Activated CD4-positive, alpha-beta T cell treated with anti-CD3 and anti-CD28 coated beads for 36 hours (primary cell): ENCODE measurements at regions of chr5 and their contacts with region 1.

Region 1: DNA sequence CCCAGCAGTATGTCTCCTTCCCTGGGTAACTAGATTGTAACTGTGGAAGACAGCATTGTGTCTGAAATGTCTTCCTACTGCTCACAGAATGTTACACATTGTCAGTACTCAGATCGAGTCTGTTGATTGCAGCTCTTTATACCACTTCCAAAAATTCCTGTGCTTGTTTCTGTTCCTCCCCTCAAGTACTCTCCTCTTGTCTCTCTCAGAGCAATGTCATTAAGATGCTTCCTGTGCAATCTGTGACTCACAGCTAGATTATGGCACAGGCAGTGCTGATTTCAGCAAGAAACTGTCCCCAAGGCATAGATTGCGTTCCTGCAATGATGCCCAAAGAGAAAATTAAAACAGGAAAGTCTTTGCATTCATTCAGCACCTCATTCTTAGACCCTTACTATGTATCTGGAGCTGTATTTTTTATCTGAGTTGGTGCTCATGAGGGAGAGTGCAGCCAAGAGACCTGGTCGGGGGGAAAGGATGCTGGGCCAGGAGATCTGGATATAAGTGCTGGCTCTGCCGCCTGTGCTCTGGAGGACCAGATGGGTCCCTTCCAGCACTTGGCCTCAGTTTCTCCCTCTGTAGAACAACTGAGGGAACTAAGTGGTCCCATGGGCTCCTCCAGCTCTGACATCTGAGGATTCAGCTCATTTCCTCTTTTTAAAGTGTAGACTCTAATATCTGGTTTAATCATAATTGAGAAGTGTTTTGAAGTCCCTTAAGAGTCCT is 40.8 kb upstream of the GNPDA1 start:
- DNase-seq: peak; percentile 19
- ATAC-seq: peak; percentile 93
- H3K4me3 Mint-ChIP-seq: no peak overlapping the region
- H3K27ac Mint-ChIP-seq: peak overlapping the region; percentile 55
- H3K4me1 Mint-ChIP-seq: peaks cover 28% of the 10 kb centered on the region
- H3K27me3 Mint-ChIP-seq: no peaks in the 10 kb centered on the region

Region 2: GRCh38 chr5:142063878-142064331 is 10.3 kb after region 1 on chr5:
- CTCF ChIA-PET with region 1: interaction called, 11 read pairs
- POLR2A ChIA-PET with region 1: no interaction called
- intact Hi-C with region 1: no loop called
- DNase-seq: peak; percentile 58
- ATAC-seq: peak; percentile 82
- H3K4me3 Mint-ChIP-seq: peak overlapping the region; percentile 5
- H3K27ac Mint-ChIP-seq: peak overlapping the region; percentile 49
- H3K4me1 Mint-ChIP-seq: peaks cover 14% of the 10 kb centered on the region
- H3K27me3 Mint-ChIP-seq: no peaks in the 10 kb centered on the region